MCF 10A (cell line): ENCODE measurements at regions of chr1 and their contacts with region 1.

Region 1: DNA sequence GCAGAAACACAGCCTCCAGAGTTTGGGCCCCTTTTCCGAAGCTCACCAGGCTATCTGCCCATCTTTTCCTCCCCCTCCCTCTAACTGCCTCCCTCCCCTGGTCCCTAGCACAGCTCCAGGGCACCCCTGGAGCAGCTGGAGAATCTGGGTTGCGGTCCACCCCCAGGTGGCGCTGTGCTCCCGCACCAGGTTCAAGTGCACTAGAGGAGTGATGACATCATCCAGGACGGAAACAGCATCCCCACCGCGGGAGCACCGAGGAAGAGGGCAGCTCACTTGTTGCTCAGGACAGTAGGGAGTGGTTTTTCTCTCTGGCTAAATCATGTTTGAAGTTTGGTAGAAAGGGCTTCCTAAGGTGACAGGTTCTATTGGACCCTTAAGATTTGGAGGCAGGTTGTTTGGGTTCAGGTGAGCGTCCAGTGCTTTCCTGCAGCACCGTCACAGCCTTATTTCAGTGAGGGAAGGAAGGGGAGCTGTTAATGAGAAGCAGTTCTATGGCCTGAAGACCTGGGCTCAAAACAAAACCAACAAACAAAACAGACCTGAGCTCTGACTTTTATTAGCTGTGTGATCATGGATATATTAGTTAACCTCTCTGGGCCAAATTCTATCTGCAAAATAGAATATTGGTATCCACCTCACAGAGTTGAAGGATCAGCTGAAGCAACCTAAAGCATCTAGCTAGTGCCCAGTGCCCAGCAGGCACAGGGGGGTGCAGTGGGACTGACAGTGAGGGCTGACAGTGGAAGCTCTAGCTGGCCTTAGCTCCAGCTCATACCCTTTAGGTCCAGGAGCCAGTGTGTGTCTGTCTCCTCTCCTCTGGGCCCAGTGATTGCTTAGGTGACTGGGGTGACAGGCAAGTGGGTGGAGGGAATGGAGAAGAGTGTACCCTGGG is 7.5 kb downstream of the SHISA4 start:
- DNase-seq: peak; percentile 95
- H3K4me3 Mint-ChIP-seq: no peak overlapping the region
- H3K27ac Mint-ChIP-seq: no peak overlapping the region
- H3K4me1 Mint-ChIP-seq: peaks cover 5% of the 10 kb centered on the region
- H3K27me3 Mint-ChIP-seq: peaks cover 13% of the 10 kb centered on the region
- CTCF ChIP-seq: peak; percentile 99

Region 2: DNA sequence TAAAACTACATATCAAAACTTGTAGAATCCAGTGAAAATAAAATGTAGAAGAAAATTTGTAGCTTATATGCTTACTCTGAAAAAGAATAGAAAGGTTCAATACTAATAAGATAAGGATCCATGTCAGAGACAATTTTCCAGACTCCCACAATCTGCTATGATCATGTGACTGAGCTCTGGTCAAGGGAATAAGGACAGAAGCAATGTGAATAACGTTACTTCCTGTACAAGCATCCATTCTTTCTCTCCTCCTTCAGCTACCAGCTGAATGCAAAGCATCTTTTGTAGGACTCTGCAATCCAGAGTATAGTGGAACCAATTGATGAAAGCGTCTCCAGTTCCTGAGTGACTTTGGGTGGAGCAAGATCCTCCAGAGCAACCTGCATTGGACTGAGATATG is 652.1 kb before region 1 on chr1:
- CTCF ChIA-PET with region 1: no interaction called
- POLR2A ChIA-PET with region 1: no interaction called
- intact Hi-C with region 1: no loop called
- DNase-seq: no peak
- H3K4me3 Mint-ChIP-seq: no peak overlapping the region
- H3K27ac Mint-ChIP-seq: no peak overlapping the region
- H3K4me1 Mint-ChIP-seq: peaks cover 7% of the 10 kb centered on the region
- H3K27me3 Mint-ChIP-seq: peaks cover 43% of the 10 kb centered on the region
- CTCF ChIP-seq: no peak

Region 3: GRCh38 chr1:201608635-201609395 is 287.3 kb before region 1 on chr1:
- CTCF ChIA-PET with region 1: no interaction called
- POLR2A ChIA-PET with region 1: no interaction called
- intact Hi-C with region 1: no loop called
- DNase-seq: no peak
- H3K4me3 Mint-ChIP-seq: no peak overlapping the region
- H3K27ac Mint-ChIP-seq: no peak overlapping the region
- H3K4me1 Mint-ChIP-seq: no peaks in the 10 kb centered on the region
- H3K27me3 Mint-ChIP-seq: no peaks in the 10 kb centered on the region
- CTCF ChIP-seq: no peak

Region 4: GRCh38 chr1:201748335-201748734 is 147.8 kb before region 1 on chr1:
- CTCF ChIA-PET with region 1: no interaction called
- POLR2A ChIA-PET with region 1: no interaction called
- intact Hi-C with region 1: no loop called
- DNase-seq: peak; percentile 69
- H3K4me3 Mint-ChIP-seq: no peak overlapping the region
- H3K27ac Mint-ChIP-seq: peak overlapping the region; percentile 49
- H3K4me1 Mint-ChIP-seq: peaks cover 66% of the 10 kb centered on the region
- H3K27me3 Mint-ChIP-seq: no peaks in the 10 kb centered on the region
- CTCF ChIP-seq: no peak

Region 5: DNA sequence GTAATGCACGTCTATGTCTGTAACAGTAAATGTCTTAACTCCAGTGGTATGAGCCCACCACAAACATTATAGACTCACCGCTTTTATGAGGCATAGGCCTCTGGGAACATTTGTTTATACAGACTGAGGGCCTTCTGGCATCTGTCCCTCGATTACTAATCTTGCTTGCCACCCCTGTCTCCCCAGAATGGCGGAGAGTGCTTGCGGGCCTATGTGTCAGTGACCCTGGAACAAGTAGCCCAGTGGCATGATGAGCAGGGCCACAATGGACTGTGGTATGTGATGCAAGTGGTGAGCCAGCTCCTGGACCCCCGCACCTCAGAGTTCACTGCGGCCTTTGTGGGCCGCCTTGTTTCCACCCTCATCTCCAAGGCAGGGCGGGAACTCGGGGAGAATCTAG is 25.8 kb before region 1 on chr1:
- CTCF ChIA-PET with region 1: interaction called, 130 read pairs
- POLR2A ChIA-PET with region 1: no interaction called
- intact Hi-C with region 1: no loop called
- DNase-seq: no peak
- H3K4me3 Mint-ChIP-seq: no peak overlapping the region
- H3K27ac Mint-ChIP-seq: no peak overlapping the region
- H3K4me1 Mint-ChIP-seq: no peaks in the 10 kb centered on the region
- H3K27me3 Mint-ChIP-seq: no peaks in the 10 kb centered on the region
- CTCF ChIP-seq: no peak

Region 6: DNA sequence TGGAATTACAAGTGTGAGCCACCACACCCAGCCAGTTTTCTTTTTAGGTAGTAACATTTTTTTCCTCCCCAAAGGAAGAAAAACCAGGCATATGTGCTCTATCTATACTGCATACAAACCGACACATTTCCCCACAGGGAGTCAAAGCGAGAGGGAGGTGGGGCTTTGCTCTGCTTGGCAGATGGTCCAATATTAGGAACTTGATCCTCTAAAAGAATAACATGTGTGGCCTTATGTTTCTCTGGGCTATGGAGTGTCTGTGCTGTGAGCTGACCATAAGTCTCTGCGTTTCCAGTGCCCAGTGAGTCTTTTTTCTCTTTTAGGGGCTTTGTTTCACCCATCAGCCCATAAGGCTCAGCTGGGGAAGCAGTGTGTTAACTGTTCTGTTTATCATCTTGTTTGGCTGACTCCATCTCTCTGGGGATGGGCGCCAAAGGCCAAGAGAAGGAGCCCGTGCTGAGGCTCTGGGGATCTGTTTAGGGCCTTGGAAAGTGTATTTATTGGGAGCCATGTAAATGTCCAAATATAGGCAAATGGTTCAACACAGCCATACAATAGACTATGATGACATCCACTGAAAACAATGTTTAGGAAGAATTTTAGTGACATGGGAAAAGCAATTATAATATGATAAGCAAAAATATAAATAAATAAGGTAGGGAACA is 30.0 kb after region 1 on chr1:
- CTCF ChIA-PET with region 1: interaction called, 51 read pairs
- POLR2A ChIA-PET with region 1: no interaction called
- intact Hi-C with region 1: no loop called
- DNase-seq: no peak
- H3K4me3 Mint-ChIP-seq: no peak overlapping the region
- H3K27ac Mint-ChIP-seq: no peak overlapping the region
- H3K4me1 Mint-ChIP-seq: no peaks in the 10 kb centered on the region
- H3K27me3 Mint-ChIP-seq: no peaks in the 10 kb centered on the region
- CTCF ChIP-seq: no peak

Region 7: DNA sequence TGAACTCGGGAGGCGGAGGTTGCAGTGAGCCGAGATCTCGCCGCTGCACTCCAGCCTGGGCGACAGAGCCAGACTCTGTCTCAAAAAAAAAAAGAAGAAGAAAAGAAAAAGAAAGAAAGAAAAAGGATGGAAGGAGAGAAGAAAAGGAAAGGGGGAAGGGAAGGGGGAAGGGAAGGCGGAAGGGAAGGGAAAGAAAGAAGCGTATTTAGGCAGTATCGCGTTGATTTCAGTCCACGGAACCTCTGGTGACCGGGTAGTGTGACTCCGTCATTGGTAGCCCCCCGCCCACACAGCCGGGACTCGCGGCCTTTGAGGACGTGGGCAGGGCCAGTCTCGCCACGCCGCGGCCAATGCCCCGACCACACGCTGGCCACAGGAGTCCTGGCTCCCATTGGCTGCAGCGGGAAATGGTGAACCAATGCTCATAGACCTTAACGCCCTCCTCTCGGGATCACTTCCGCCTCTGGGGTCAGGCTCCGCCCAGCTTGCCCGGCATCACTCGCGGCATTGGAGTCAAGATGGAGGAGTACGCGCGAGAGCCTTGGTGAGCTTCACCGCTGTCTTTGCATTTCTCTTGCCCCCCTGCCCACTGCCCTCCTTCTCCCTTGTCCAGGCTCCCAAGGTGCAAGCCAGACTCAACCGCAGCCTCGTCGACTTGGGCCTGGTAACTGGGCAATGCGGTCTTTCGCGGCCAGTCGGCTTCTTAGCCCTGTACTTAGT is 59.0 kb after region 1 on chr1 and contains the start of gene TIMM17A:
- CTCF ChIA-PET with region 1: interaction called, 882 read pairs
- POLR2A ChIA-PET with region 1: interaction called, 60 read pairs
- intact Hi-C with region 1: loop called (anchors 1 kb)
- DNase-seq: peak; percentile 100
- H3K4me3 Mint-ChIP-seq: peak within 1 kb of the TSS; percentile 96
- H3K27ac Mint-ChIP-seq: peak within 1 kb of the TSS; percentile 99
- H3K4me1 Mint-ChIP-seq: peaks cover 12% of the 10 kb centered on the region
- H3K27me3 Mint-ChIP-seq: no peaks in the 10 kb centered on the region
- CTCF ChIP-seq: no peak
- total RNA-seq, gene TIMM17A: 157 and 171 TPM in 2 replicates

Region 8: DNA sequence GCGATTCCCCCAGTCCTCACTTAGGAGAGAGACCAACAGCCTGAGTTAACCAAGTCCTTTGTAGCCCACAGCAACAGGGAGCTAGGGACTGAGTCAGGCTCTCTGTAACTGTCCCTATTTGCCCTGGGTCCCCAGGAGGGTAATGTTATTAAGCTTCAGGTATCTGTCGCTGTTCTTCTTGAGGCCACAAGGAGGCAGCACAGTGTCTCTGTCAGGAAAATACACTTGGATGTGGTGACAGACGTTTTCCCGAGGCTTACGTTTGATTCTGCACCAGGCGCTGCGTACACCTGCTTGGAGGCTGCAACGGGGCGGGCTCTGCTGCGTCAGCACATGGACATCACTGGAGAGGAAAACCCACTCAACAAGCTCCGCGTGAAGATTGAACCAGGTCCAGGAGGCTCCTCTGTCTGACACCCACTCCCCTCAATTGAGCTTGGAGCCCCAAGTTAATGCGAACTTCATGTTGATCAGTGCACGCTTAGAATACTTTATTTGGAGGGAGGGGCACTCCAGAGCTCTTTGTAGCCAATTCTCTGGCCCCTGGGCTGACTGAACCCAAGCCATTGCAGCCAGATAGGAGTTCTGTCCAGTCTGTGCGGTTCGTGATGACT is 103.6 kb after region 1 on chr1:
- CTCF ChIA-PET with region 1: interaction called, 68 read pairs
- POLR2A ChIA-PET with region 1: interaction called, 7 read pairs
- intact Hi-C with region 1: no loop called
- DNase-seq: peak; percentile 81
- H3K4me3 Mint-ChIP-seq: no peak overlapping the region
- H3K27ac Mint-ChIP-seq: no peak overlapping the region
- H3K4me1 Mint-ChIP-seq: no peaks in the 10 kb centered on the region
- H3K27me3 Mint-ChIP-seq: no peaks in the 10 kb centered on the region
- CTCF ChIP-seq: peak; percentile 78

Region 9: DNA sequence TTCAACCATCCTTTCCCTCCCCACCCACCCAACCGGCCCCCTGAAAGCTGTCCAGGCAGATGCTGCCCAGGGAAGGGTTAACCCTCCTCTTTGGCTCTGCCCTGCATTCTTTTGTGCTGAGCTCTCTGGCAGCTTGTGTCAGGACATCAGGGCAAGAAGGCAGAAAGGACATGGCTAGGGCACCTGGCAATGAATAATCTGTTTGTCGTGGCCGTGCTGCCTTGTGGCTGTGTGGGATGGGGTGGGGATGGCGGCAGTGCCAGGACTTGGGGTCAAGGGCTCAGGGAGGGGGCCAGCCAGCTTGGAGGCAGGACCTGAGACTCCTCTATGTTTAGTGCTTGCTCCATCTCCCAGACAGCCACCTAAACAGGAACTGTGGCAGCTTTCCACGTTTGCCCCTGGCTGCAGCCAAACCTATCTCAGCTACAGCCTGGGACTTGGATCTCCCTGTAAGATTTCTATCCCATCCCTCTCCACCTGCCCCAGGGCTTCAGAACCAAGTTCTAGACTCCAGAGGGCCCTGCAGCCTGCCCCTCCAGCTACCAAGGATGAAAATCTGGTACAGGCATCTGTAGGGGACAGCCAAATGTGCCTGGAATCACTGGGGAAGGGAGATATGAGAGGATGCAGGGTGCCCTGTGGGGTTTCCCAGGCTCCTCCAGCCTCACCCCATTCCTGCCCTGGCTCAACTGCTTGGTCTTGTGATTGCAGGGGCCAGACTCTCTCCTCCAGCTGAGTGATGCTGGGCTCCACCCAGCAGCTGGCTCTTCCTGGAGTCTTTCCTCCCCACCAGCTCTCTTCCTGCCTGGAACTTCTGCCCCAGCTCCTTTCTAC is 216.9 kb after region 1 on chr1:
- CTCF ChIA-PET with region 1: interaction called, 72 read pairs
- POLR2A ChIA-PET with region 1: interaction called, 4 read pairs
- intact Hi-C with region 1: no loop called
- DNase-seq: peak; percentile 27
- H3K4me3 Mint-ChIP-seq: no peak overlapping the region
- H3K27ac Mint-ChIP-seq: no peak overlapping the region
- H3K4me1 Mint-ChIP-seq: peaks cover 31% of the 10 kb centered on the region
- H3K27me3 Mint-ChIP-seq: no peaks in the 10 kb centered on the region
- CTCF ChIP-seq: no peak